ENCODE measurements at regions of chr4 and their contacts with region 1.

Region 1: DNA sequence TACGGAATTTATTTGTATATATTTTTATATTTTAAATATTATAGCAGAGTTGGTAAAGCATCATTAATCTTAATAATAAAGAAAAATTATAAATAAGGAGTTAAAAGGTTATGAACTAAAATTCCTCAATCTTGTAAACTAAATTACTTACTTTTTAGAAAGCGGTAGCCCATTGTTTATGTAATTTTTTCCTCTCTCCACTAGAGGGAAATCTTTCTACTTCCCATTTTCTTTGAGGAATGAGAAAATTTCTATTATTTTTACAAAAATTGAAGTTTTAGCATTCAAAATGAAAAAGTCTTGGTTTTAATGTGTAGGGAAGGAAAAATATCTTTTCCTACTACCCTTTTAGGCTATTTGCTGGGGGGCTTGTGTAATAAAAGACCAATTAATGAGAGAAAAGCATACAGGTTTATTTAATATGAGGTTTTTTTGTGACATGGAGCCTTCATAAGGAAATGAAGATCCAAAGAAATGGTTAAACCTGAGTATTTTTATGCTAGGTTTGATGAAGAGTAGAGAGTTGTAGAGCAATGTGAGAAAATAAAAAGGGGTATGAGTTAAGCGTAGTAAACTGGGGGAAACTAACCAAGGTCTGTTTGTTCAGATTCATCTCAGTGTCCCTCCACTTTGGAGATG is 68.7 kb upstream of the ADAD1 start:
- DNase-seq: peak in 2 of 14 experiments; percentile 16 to 35
- ATAC-seq: no peak
- H3K4me3 ChIP-seq: no peak overlapping the region
- H3K4me3 Mint-ChIP-seq: no peak overlapping the region
- H3K27ac ChIP-seq: no peak overlapping the region
- H3K27ac Mint-ChIP-seq: no peak overlapping the region
- H3K4me1 ChIP-seq: no peaks in the 10 kb centered on the region
- H3K4me1 Mint-ChIP-seq: no peaks in the 10 kb centered on the region
- H3K27me3 ChIP-seq: no peaks in the 10 kb centered on the region
- H3K27me3 Mint-ChIP-seq: no peaks in the 10 kb centered on the region
- CTCF ChIP-seq: peak; percentile 59

Region 2: DNA sequence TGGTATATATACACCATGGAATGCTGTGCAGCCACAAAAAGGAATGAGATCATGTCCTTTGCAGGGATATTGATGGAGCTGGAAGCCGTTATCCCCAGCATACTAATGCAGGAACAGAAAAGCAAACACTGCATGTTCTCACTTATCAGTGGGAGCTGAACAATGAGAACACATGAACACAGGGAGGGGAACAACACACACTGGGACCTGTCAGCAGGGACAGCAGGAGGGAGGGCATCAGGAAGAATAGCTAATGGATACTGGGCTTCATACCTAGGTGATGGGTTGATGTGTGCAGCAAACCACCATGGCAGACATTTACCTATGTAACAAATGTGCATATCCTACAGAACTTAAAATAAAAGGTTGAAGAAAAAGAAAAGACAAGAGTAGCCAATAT is 12.4 kb before region 1 on chr4:
- CTCF ChIA-PET with region 1: no interaction called
- POLR2A ChIA-PET with region 1: no interaction called
- intact Hi-C with region 1: no loop called
- DNase-seq: no peak
- ATAC-seq: no peak
- H3K4me3 ChIP-seq: no peak overlapping the region
- H3K4me3 Mint-ChIP-seq: no peak overlapping the region
- H3K27ac ChIP-seq: no peak overlapping the region
- H3K27ac Mint-ChIP-seq: peak overlapping the region; percentile 5
- H3K4me1 ChIP-seq: no peaks in the 10 kb centered on the region
- H3K4me1 Mint-ChIP-seq: no peaks in the 10 kb centered on the region
- H3K27me3 ChIP-seq: no peaks in the 10 kb centered on the region
- H3K27me3 Mint-ChIP-seq: no peaks in the 10 kb centered on the region
- CTCF ChIP-seq: no peak

Region 3: DNA sequence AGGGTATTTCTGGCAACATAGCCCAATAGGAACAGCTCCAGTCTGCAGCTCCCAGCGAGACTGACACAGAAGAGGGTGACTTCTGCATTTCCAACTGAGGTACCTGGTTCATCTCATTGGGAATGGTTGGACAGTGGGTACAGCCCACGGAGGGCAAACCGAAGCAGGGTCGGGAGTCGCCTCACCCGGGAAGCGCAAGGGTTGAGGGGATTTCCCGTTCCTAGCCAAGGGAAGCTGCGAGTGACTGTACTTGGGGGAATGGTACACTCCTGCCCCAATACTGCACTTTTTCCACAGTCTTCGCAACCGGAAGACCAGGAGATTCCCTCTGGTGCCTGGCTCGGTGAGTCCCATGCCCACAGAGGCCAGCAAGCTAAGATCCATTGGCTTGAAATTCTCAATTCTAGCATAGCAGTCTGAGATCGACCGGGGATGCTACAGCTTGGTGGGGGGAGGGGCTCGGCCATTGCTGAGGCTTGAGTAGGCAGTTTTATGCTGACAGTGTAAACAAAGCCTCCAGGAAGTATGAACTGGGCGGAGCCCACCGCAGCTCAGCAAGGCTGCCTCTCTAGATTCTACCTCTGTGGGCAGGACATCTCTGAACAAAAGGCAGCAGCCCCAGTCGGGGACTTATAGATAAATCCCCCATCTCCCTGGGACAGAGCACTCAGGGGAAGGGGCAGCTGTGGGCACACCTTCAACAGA is 54.7 kb after region 1 on chr4:
- CTCF ChIA-PET with region 1: no interaction called
- POLR2A ChIA-PET with region 1: no interaction called
- intact Hi-C with region 1: no loop called
- DNase-seq: peak in 10 of 14 experiments; percentile 0 to 58 (median 15)
- ATAC-seq: peak; percentile 54
- H3K4me3 ChIP-seq: no peak overlapping the region
- H3K4me3 Mint-ChIP-seq: no peak overlapping the region
- H3K27ac ChIP-seq: no peak overlapping the region
- H3K27ac Mint-ChIP-seq: no peak overlapping the region
- H3K4me1 ChIP-seq: peaks cover 12% of the 10 kb centered on the region
- H3K4me1 Mint-ChIP-seq: peaks cover 6% of the 10 kb centered on the region
- H3K27me3 ChIP-seq: no peaks in the 10 kb centered on the region
- H3K27me3 Mint-ChIP-seq: no peaks in the 10 kb centered on the region
- CTCF ChIP-seq: no peak

Region 4: GRCh38 chr4:122450847-122451246 is 140.7 kb after region 1 on chr4:
- CTCF ChIA-PET with region 1: no interaction called
- POLR2A ChIA-PET with region 1: no interaction called
- intact Hi-C with region 1: loop called (anchors 5 to 10 kb)
- DNase-seq: peak in 6 of 14 experiments; percentile 1 to 43 (median 24)
- ATAC-seq: no peak
- H3K4me3 ChIP-seq: no peak overlapping the region
- H3K4me3 Mint-ChIP-seq: no peak overlapping the region
- H3K27ac ChIP-seq: no peak overlapping the region
- H3K27ac Mint-ChIP-seq: no peak overlapping the region
- H3K4me1 ChIP-seq: no peaks in the 10 kb centered on the region
- H3K4me1 Mint-ChIP-seq: peaks cover 34% of the 10 kb centered on the region
- H3K27me3 ChIP-seq: no peaks in the 10 kb centered on the region
- H3K27me3 Mint-ChIP-seq: no peaks in the 10 kb centered on the region
- CTCF ChIP-seq: peak; percentile 49

Region 5: GRCh38 chr4:122458625-122459024 is 148.5 kb after region 1 on chr4:
- CTCF ChIA-PET with region 1: no interaction called
- POLR2A ChIA-PET with region 1: no interaction called
- intact Hi-C with region 1: loop called (anchors 5 to 10 kb)
- DNase-seq: peak in 10 of 14 experiments; percentile 3 to 78 (median 14)
- ATAC-seq: peak; percentile 73
- H3K4me3 ChIP-seq: peak overlapping the region; percentile 41
- H3K4me3 Mint-ChIP-seq: peak overlapping the region; percentile 90
- H3K27ac ChIP-seq: peak overlapping the region in 1 of 2 donors; percentile 6
- H3K27ac Mint-ChIP-seq: peak overlapping the region; percentile 69
- H3K4me1 ChIP-seq: peaks cover 2% of the 10 kb centered on the region
- H3K4me1 Mint-ChIP-seq: peaks cover 52% of the 10 kb centered on the region
- H3K27me3 ChIP-seq: no peaks in the 10 kb centered on the region
- H3K27me3 Mint-ChIP-seq: no peaks in the 10 kb centered on the region
- CTCF ChIP-seq: no peak

Region 6: DNA sequence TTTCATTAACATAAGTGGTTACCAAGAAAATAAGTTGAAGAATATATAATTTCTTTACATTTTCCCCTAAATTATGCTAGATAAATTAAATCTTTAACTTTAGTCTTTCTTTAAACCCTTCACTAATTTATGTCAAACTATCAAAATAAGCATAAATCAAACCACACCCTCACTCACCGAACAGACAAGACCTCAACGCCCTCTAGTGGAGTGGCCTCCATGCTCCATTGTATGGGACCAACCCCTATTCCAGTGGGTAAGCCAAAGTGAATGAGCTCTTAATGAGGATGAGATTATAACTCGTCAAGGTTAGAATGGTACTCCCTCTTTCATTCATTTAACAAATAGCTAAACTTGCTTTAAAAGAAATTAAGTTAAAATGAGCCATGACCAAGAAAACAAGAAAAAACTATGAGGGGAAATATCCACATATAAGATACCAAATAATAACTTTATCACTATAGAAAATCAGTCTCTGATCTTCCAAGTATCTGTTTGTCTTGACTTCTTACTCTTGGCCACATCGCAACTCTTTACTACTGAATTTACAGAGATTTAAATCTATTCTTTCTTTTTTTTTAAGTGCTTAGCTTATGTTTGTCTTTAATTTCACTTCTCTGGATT is 406.8 kb after region 1 on chr4:
- CTCF ChIA-PET with region 1: no interaction called
- POLR2A ChIA-PET with region 1: no interaction called
- intact Hi-C with region 1: loop called in 1 of 2 experiments (anchors 10 kb)
- DNase-seq: peak; percentile 50 to 82 (median 69)
- ATAC-seq: peak; percentile 96
- H3K4me3 ChIP-seq: no peak overlapping the region
- H3K4me3 Mint-ChIP-seq: no peak overlapping the region
- H3K27ac ChIP-seq: no peak overlapping the region
- H3K27ac Mint-ChIP-seq: no peak overlapping the region
- H3K4me1 ChIP-seq: no peaks in the 10 kb centered on the region
- H3K4me1 Mint-ChIP-seq: peaks cover 17% of the 10 kb centered on the region
- H3K27me3 ChIP-seq: no peaks in the 10 kb centered on the region
- H3K27me3 Mint-ChIP-seq: no peaks in the 10 kb centered on the region
- CTCF ChIP-seq: peak; percentile 83